ENCODE measurements at regions of chr1 and their contacts with region 1.

Region 1: DNA sequence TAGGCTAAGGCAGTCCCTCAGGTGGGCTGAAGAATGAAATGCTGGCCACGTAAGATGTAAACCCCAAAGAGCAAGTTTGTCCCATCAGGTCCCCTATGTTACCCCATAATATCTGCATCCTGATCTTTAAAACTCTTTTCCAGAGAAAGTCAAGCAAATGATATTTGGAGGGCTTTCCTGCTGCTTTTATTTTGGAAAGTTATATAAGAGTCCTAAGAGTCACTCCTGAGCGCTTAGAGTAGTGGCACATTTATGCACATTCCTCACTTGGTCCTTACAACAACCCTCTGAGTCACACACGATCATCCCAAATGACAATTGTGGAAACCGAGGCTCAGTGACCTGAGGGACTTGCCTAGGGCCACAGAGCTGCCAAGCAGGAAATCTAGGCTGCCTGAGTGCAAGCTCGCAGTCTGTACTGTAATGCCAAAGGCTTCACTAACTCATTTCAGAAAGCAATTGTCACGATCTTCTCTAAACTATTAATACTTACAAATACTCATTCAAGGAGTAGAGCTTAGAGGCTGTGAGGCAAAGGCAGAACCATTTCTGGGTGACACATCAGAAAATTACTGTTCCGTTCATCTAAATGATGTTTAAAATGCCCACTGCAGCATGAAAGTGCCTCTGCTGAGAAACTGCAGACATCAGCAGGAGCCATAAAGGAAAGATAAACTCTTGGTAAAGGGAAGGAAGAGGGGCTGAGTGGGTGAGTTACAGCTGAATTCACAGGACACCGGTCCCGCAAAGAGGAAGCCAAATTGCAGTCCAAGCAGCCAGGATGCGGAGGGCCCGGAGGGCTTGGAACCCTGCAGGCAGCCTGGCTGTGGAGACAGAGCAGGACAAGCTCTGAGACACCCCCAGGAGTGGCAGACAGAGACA is 30.8 kb downstream of the CAPZB start:
- DNase-seq: no peak
- ATAC-seq: peak; percentile 24
- H3K4me3 ChIP-seq: no peak overlapping the region
- H3K4me3 Mint-ChIP-seq: peak overlapping the region in 9 of 10 donors; percentile 42 to 91 (median 78)
- H3K27ac ChIP-seq: peak overlapping the region; percentile 79
- H3K27ac Mint-ChIP-seq: peak overlapping the region; percentile 10 to 97 (median 91)
- H3K4me1 ChIP-seq: peaks cover 75 to 86% of the 10 kb centered on the region in 2 donors
- H3K4me1 Mint-ChIP-seq: peaks cover 80 to 95% (median 91%) of the 10 kb centered on the region in 7 donors
- H3K27me3 ChIP-seq: no peaks in the 10 kb centered on the region
- H3K27me3 Mint-ChIP-seq: no peaks in the 10 kb centered on the region

Region 2: DNA sequence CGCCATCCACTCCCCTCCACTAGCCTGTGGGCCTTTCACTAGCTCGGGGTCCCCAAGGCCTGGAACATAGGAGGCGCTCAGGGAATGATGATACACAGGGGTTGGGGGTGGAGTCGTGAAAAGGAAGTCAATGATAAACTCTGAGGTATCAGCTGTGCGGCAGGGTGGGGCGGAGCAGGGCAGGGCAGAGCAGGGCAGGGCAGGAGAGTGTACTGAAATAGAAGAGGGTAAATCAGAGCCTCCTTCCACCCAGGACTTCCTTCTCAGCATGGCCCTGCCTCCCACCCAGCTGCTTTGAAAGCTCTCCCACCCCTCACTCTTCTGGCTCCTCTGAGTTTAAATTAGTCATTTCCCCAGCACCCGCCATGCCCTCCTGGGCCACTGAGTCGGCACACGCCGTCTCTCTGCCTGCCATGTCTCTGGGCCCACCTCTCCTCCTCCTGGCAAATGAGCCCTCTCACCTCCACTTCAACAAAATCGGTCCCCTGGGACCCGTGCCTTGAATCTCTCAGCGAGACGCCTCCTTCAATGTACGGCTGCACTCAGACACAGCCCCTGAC is 14.0 kb after region 1 on chr1:
- CTCF ChIA-PET with region 1: interaction called, 3 read pairs
- POLR2A ChIA-PET with region 1: interaction called, 11 read pairs
- intact Hi-C with region 1: loop called in 1 of 2 experiments (anchors 1 kb)
- DNase-seq: peak in 8 of 9 donors; percentile 54 to 79 (median 70)
- ATAC-seq: peak; percentile 92
- H3K4me3 ChIP-seq: peak overlapping the region; percentile 32
- H3K4me3 Mint-ChIP-seq: peak overlapping the region; percentile 67 to 84 (median 80)
- H3K27ac ChIP-seq: peak overlapping the region; percentile 73
- H3K27ac Mint-ChIP-seq: peak overlapping the region; percentile 87 to 97 (median 94)
- H3K4me1 ChIP-seq: peaks cover 81 to 92% of the 10 kb centered on the region in 2 donors
- H3K4me1 Mint-ChIP-seq: peaks cover 56 to 99% (median 94%) of the 10 kb centered on the region in 7 donors
- H3K27me3 ChIP-seq: no peaks in the 10 kb centered on the region
- H3K27me3 Mint-ChIP-seq: no peaks in the 10 kb centered on the region

Measured in naive thymus-derived CD4-positive, alpha-beta T cell (primary cell).